ENCODE measurements at regions of chr9 and their contacts with region 1.

Region 1: DNA sequence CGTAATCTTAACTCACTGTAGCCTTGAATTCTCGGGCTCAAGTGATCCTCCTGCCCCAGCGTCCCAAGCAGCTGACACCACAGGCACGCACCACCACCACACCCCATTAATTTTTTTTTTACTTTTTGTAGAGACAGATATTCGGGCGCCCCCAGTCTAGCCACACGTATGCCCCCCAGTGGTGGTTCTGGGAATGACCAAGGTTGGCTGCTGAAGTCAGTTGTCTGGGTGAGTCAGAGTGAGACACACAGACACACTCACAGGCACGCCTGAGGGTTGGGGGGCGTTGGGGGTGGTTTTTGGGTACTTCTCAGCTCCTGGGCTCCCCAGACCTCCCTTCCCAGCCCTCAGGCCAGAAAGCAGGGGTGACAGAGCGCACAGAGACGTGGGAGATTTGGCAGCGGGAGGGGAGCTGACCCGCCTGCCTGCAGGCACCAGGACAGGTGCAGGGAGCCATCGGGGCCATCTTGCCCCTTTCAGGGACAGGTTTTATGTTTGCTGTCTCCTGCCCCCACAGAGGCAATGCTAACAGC is 4.2 kb upstream of the ENTPD8 start:
- DNase-seq: peak; percentile 73
- ATAC-seq: peak; percentile 94
- H3K4me3 Mint-ChIP-seq: peak overlapping the region; percentile 24
- H3K27ac Mint-ChIP-seq: no peak overlapping the region
- H3K4me1 Mint-ChIP-seq: peaks cover 8% of the 10 kb centered on the region
- H3K27me3 Mint-ChIP-seq: peaks cover 9% of the 10 kb centered on the region
- CTCF ChIP-seq: peak; percentile 89

Region 2: DNA sequence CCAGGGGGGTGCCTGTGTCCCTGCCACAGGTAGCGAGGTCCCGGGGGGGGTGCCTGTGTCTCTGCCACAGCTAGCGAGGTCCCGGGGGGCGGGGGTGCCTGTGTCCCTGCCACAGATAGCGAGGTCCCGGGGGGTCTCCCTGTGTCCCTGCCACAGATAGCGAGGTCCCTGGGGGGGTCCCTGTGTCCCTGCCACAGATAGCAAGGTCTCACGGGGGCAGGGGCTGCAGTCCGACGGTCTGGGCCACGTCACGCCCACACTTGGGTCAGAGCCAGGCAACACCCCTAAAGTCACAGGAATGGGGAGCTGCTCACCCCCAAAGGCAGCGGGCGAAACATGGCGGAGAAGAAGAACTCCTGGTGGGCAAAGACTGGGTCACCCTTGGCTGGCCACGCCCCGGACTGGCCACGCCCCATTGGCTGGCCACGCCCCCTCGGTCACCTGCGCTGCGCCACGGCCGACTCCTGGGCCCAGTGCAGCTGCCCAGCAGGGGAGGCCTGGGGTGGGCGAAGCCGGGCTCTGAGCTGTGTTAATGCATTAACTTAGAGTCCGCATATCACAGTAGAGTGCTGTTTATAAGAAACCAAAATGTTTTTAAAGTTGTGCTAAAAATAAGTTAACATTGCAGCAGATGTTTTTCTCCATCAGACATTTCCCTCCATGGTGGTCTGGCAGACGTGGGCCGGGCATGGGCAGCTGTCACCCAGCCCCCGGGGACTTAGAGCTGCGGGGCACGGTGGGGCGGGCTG is 15.2 kb before region 1 on chr9:
- CTCF ChIA-PET with region 1: interaction called, 3 read pairs
- POLR2A ChIA-PET with region 1: no interaction called
- intact Hi-C with region 1: loop called (anchors 2 kb)
- DNase-seq: peak; percentile 65
- ATAC-seq: peak; percentile 73
- H3K4me3 Mint-ChIP-seq: peak overlapping the region; percentile 38
- H3K27ac Mint-ChIP-seq: no peak overlapping the region
- H3K4me1 Mint-ChIP-seq: peaks cover 13% of the 10 kb centered on the region
- H3K27me3 Mint-ChIP-seq: peaks cover 2% of the 10 kb centered on the region
- CTCF ChIP-seq: no peak

Region 3: DNA sequence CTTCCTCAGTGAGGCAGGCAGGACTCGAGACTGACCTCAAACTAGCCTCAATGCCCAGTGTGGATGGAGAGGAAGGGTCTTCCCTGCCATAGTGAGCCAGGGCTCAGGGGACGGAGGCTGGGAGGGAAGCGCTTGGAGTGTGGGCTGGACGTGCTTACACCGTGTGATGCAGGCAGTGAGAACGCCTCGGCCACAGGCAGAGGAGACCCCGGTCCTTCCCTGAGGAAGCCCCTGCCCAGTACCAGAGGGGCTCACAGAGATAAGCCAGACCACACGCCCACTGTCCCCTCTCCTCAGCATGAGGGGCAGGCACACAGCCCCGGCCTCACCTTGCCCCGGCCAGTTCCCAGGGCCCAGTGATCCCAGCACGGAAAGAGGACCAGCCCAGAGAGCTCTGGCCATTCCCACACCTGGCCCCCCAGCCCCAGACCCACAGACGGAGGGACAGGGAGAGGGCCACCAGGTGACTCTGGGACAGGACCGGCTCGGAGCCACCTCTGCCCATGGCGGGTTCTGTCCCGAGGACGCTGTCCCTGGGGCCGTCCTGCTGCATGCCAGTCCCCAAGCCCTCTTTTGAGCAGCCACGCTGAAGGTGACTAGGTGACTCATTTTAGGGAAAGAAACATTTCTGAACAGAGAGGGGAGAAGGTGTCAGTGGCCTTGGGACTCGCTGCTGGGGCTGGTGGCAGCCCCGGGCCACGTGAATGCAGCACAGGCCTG is 19.8 kb after region 1 on chr9:
- CTCF ChIA-PET with region 1: no interaction called
- POLR2A ChIA-PET with region 1: no interaction called
- intact Hi-C with region 1: no loop called
- DNase-seq: no peak
- ATAC-seq: no peak
- H3K4me3 Mint-ChIP-seq: no peak overlapping the region
- H3K27ac Mint-ChIP-seq: no peak overlapping the region
- H3K4me1 Mint-ChIP-seq: peaks cover 6% of the 10 kb centered on the region
- H3K27me3 Mint-ChIP-seq: no peaks in the 10 kb centered on the region
- CTCF ChIP-seq: no peak

Measured in activated B cell treated with CpG ODN at 0.5 μM for 24 hours (primary cell).